ENCODE measurements at regions of chr22 and their contacts with region 1.

Region 1: DNA sequence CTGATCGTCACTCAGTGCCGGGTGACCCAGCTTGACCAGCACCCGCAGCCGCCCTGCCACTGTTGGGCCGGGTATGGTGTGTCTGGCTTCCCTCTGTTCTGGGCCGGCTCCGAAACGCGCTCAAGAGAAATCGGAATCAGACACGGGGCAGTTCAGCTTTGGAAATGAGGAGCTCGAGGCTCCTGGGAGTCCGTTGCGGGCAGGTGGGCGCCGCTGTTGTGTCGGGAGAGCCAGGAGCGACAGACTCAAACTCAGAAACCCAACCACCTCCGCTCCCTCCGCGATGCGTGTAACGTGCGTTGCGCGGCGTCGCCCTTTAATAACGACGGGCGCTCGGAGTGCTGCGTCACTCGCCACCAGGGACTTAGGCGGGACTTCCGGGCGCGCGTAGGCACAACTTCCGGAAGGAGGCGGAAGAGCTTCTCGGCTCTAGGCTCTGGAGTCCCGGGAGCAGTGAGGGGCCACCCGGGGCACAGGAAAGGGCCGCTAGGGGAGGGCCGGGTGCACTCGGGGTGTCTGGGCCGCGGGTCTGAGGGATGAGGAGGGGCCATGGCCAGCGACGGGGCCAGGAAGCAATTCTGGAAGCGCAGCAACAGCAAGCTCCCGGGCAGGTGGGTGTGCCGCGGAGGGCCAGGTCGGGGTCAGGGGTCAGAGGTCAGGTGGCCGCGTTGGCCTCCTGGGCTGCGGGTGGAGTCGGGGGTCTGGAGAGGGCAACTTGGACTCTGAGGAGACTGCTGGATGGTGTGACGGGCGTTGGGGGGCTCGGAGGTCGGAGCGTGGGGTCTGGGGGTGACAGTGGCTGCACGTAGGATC is at the start of gene TBC1D22A:
- DNase-seq: peak; percentile 95 to 96
- ATAC-seq: peak; percentile 91 to 98 (median 96)
- H3K4me3 ChIP-seq: peak within 1 kb of the TSS; percentile 63 to 95 (median 86)
- H3K27ac ChIP-seq: peak within 1 kb of the TSS; percentile 79 to 98 (median 94)
- H3K4me1 ChIP-seq: peaks cover 4 to 67% (median 51%) of the 10 kb centered on the region in 9 donors
- H3K27me3 ChIP-seq: no peaks in the 10 kb centered on the region
- CTCF ChIP-seq: peak in 1 of 9 donors; percentile 9
- total RNA-seq, gene TBC1D22A: 14.6 to 27.9 (median 18.0) TPM

Region 2: DNA sequence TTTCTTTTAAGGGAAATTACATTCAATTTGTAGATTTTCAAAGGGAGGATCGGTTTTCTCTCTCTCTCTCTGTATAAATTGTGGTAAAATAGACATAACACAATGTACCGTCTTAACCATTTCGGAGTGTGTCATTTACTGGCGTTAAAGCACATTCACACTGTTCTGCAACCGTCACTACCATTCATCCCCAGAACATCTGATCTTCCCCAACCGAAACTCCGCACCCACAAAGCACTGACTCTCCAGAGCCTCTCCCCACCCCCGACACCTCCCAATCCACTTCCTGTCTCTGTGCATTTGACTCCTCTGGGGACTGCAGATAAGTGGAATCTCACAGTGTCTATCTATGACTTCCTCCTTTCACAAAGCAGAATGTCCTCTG is 158.1 kb before region 1 on chr22:
- intact Hi-C with region 1: no loop called
- DNase-seq: peak in 1 of 2 donors; percentile 48
- ATAC-seq: peak in 7 of 8 donors; percentile 53 to 73 (median 65)
- H3K4me3 ChIP-seq: no peak overlapping the region
- H3K27ac ChIP-seq: peak overlapping the region in 8 of 10 donors; percentile 3 to 82 (median 46)
- H3K4me1 ChIP-seq: peaks cover 4 to 51% (median 32%) of the 10 kb centered on the region in 9 donors
- H3K27me3 ChIP-seq: no peaks in the 10 kb centered on the region
- CTCF ChIP-seq: no peak

Region 3: DNA sequence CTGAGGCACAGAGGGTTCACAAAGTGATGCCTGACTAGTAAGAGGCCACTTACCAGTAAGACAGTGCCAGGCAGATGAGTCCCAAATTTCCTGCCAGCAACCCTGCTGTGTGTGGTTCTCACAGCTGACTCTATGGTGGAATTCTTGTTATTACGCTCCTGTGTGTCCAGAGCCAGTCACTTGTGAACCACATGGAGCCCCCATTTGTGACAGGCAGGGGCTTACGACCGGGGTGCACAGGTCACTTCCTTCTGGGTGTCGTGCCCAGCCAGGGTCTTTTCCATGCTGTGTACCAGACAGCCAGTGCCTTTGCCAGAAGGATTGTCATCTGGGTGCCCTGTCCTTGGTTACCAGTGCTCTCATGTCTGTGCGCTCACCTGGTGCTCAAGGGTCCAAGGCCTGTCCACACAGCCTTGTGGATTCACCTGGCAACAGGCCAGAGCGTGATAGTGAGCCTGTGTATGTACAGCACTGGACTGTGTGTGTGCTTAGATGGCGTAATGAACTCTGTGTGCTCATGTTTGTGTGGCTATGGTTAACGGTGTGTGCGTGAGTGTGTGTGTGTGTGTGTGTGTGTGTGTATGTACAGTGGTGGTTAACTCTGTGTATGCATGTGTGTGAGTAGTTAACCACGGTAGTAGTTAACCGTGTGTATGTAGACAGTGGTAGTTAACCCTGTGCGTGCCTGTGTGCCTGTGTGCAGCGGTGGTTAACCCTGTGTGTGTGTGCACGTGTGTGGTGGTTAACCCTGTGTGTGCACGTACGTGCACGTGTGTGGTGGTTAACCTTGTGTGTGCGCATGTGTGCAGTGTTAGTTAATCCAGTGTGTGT is 123.6 kb before region 1 on chr22:
- intact Hi-C with region 1: no loop called
- DNase-seq: peak in 1 of 2 donors; percentile 17
- ATAC-seq: peak in 6 of 8 donors; percentile 5 to 48 (median 24)
- H3K4me3 ChIP-seq: no peak overlapping the region
- H3K27ac ChIP-seq: peak overlapping the region in 3 of 10 donors; percentile 10 to 33 (median 21)
- H3K4me1 ChIP-seq: peaks cover 18 to 66% (median 54%) of the 10 kb centered on the region in 9 donors
- H3K27me3 ChIP-seq: no peaks in the 10 kb centered on the region
- CTCF ChIP-seq: no peak

Region 4: DNA sequence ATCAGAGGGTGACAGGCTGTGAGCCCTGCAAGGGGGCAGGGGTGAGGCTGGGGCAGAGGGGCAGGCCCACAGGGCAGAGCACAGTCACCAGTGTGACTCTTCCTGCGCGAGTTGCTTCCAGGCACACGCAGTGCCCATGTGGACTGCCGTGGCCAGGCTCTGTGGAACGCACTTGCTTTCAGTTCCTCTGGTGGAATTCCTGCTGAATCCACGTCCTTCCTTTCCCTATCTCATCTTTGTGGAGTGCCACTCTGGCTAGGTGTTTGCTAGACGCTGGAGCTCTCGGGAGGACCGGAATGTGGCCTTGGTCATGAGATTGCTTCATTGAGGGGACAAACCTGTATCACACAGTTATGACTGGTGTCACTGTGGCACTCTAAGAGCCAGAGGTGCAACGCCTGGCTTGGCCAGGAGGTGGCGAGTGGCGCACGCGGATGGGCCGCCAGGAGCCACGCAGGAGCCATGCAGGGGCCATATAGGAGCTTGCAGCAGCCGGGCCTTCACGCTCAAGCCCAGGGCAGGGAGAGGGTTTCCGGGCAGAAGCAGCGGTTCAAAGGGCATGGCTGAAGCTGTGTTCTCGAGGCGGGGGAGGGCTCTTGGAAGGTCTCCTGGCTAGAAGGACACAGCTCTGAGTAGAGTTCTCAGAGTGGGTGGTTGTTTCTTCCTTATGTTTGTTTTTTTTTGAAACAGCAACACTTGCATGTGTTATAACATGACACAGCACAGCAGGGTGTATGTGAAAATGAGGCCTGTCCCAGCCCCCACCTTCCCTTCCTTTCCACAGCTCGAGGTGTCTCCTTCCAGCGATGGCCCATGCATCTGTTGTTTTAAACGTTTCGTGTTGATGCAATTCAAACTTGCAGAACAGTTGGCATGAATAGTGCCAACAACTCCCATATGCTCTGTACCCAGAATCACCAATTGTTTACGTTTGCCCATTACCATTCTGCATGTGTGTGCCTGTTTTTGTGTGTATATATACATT is 36.2 kb after region 1 on chr22:
- intact Hi-C with region 1: loop called in 6 of 10 experiments (anchors 2 to 5 kb)
- DNase-seq: peak; percentile 56 to 77
- ATAC-seq: peak; percentile 49 to 86 (median 84)
- H3K4me3 ChIP-seq: no peak overlapping the region
- H3K27ac ChIP-seq: no peak overlapping the region
- H3K4me1 ChIP-seq: peaks cover 0 to 20% (median 12%) of the 10 kb centered on the region in 9 donors
- H3K27me3 ChIP-seq: no peaks in the 10 kb centered on the region
- CTCF ChIP-seq: peak; percentile 75 to 94 (median 93)

Region 5: DNA sequence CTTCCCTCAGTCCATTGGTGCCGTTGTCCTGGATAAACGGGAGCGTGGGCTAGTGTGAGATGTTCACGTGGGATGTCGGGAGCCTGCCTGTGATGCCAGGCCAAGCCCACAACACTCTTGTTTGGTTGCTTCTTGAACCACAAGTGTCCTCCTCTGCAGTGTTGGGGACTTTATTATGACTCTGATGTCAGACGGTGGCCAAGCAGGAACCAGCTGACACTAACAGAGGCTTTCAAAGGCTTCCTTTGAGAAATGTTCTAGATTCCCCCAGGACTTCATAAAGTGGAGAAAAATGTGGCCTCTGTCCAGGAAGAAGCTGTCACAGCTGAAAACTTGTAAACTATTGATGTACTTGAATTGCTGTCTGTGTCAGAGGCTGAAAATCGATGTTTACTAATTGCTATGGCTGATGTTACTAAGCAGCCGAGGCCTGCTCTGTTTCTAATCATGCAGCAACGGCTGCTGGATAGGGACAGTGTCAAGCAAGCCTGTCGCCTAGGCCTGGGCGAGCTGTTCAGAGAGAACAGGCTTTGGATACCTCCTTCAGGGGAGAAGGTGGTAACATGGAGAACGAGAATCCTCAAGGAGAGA is 131.7 kb after region 1 on chr22:
- intact Hi-C with region 1: no loop called
- DNase-seq: peak in 1 of 2 donors; percentile 24
- ATAC-seq: peak; percentile 76 to 97 (median 88)
- H3K4me3 ChIP-seq: no peak overlapping the region
- H3K27ac ChIP-seq: peak overlapping the region in 6 of 10 donors; percentile 18 to 59 (median 50)
- H3K4me1 ChIP-seq: peaks cover 2 to 32% (median 15%) of the 10 kb centered on the region in 9 donors
- H3K27me3 ChIP-seq: no peaks in the 10 kb centered on the region
- CTCF ChIP-seq: no peak

Measured in heart right ventricle (tissue), 16 donors.